ENCODE measurements at regions of chr1 and their contacts with region 1.

Region 1: DNA sequence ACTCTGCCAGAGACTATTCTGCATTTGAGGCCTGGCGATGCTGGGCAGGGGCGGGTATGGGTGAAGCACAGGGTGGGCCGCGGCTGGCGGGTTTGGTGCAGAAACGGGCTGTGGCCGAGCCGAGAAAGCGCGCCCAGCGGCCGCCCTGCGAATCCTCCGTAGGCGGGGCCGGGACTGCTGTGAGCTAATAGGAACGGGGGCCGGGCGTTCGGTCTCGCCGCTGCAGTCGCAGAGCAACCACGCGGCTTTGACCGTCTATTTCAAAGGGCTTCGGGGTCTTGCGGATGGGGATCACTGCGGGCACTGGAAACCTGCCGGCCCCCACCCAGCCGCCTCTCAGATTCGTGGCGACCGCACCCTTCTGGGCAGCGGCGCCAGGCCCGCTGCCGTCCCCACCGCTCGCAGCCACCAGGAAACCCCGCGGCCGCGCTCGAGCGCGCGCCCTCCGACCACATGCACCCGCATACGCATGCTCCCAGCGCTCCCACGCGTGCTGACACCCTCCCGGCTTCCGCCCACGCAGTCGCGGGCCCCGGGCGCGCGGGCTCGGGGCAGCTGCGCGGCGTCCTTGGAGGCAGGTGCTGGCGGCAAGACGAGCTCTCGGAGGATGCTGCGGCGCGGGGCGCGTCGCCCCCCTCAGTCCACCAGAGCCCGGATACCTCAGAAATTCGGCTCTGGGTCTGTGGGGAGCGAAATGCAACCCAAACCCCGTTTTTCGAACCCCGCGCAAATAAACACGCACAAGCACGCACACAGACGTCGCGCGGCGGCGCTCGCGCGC is 32.6 kb downstream of the DNTTIP2 start:
- DNase-seq: peak; percentile 85 to 91 (median 88)
- H3K4me3 ChIP-seq: peak overlapping the region; percentile 58 to 92
- H3K4me3 Mint-ChIP-seq: peak overlapping the region; percentile 87 to 97 (median 90)
- H3K27ac ChIP-seq: peak overlapping the region; percentile 81
- H3K27ac Mint-ChIP-seq: peak overlapping the region; percentile 89 to 100 (median 95)
- H3K4me1 ChIP-seq: peaks cover 31% of the 10 kb centered on the region
- H3K4me1 Mint-ChIP-seq: peaks cover 17 to 44% (median 25%) of the 10 kb centered on the region in 4 donors
- H3K27me3 ChIP-seq: no peaks in the 10 kb centered on the region
- H3K27me3 Mint-ChIP-seq: peaks cover 1 to 6% of the 10 kb centered on the region in 2 donors

Region 2: GRCh38 chr1:92831762-92832536 is 1014.5 kb before region 1 on chr1 and contains the start of gene RPL5:
- CTCF ChIA-PET with region 1: interaction called, 3 read pairs
- POLR2A ChIA-PET with region 1: interaction called, 3 read pairs
- intact Hi-C with region 1: loop called (anchors 5 kb)
- DNase-seq: peak; percentile 97 to 100 (median 98)
- H3K4me3 ChIP-seq: peak within 1 kb of the TSS; percentile 54 to 100
- H3K4me3 Mint-ChIP-seq: peak within 1 kb of the TSS; percentile 98 to 100 (median 100)
- H3K27ac ChIP-seq: peak within 1 kb of the TSS; percentile 93
- H3K27ac Mint-ChIP-seq: peak within 1 kb of the TSS; percentile 98 to 100 (median 99)
- H3K4me1 ChIP-seq: peaks cover 46% of the 10 kb centered on the region
- H3K4me1 Mint-ChIP-seq: peaks cover 35 to 55% (median 45%) of the 10 kb centered on the region in 4 donors
- H3K27me3 ChIP-seq: no peaks in the 10 kb centered on the region
- H3K27me3 Mint-ChIP-seq: peaks cover 0 to 1% of the 10 kb centered on the region in 2 donors
- total RNA-seq, gene RPL5: 1,501 to 1,588 TPM

Region 3: GRCh38 chr1:93304716-93305138 is 541.7 kb before region 1 on chr1:
- CTCF ChIA-PET with region 1: interaction called, 40 read pairs
- POLR2A ChIA-PET with region 1: interaction called, 4 read pairs
- intact Hi-C with region 1: loop called (anchors 1 kb)
- DNase-seq: peak; percentile 51 to 60 (median 59)
- H3K4me3 ChIP-seq: no peak overlapping the region
- H3K4me3 Mint-ChIP-seq: no peak overlapping the region
- H3K27ac ChIP-seq: no peak overlapping the region
- H3K27ac Mint-ChIP-seq: no peak overlapping the region
- H3K4me1 ChIP-seq: no peaks in the 10 kb centered on the region
- H3K4me1 Mint-ChIP-seq: peaks cover 0 to 1% (median 0%) of the 10 kb centered on the region in 4 donors
- H3K27me3 ChIP-seq: no peaks in the 10 kb centered on the region
- H3K27me3 Mint-ChIP-seq: no peaks in the 10 kb centered on the region

Region 4: DNA sequence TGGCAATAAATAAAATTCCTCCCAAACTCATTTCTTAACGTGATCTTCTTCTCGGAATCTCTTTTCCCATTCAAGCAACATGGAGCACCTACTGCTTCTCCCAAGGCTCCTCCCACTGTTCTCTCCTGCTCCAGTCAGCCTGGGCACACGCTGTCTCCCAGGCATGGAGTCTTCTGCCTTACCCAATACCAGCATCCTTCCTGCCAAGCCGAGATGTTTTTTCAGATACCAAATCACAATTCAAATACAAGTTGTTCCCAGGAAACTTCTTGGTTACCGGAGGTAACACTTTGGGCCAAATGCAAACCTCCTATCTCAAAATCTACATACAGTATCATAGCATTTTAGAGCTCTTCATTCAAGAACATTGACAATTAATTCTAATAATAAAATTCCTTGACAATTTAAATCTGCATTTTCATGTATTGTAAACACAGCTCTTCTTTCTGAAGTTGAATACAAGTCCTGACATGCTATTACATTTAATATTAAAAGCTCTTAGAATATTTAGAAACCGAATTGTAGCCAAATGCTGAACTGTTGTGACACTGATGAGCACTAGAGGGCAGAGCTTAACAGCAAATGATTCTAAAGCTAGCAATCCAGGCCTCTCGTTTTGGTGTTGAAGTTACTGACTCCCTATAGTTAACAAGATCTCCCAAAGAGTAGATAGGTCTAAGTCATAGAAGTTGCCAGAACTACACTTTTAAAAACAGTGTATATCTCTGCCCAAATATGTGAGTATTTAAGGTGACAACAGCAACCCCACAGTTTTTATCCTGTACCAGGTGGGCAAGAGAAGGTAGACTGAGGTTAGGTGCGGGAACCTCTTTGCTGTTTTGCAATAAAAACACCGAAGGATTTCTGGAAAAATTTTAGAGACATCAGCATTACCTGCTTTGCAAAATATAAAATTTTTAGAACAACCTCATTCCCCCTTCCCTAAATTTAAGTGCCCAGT is 217.0 kb before region 1 on chr1:
- CTCF ChIA-PET with region 1: interaction called, 191 read pairs
- POLR2A ChIA-PET with region 1: interaction called, 15 read pairs
- intact Hi-C with region 1: loop called (anchors 1 kb)
- DNase-seq: peak in 4 of 5 donors; percentile 62 to 69 (median 63)
- H3K4me3 ChIP-seq: no peak overlapping the region
- H3K4me3 Mint-ChIP-seq: no peak overlapping the region
- H3K27ac ChIP-seq: no peak overlapping the region
- H3K27ac Mint-ChIP-seq: peak overlapping the region in 2 of 7 donors; percentile 46 to 55
- H3K4me1 ChIP-seq: no peaks in the 10 kb centered on the region
- H3K4me1 Mint-ChIP-seq: no peaks in the 10 kb centered on the region
- H3K27me3 ChIP-seq: no peaks in the 10 kb centered on the region
- H3K27me3 Mint-ChIP-seq: no peaks in the 10 kb centered on the region

Region 5: GRCh38 chr1:93878889-93879586 is 32.6 kb after region 1 on chr1 and contains the start of gene DNTTIP2:
- CTCF ChIA-PET with region 1: interaction called, 10 read pairs
- POLR2A ChIA-PET with region 1: interaction called, 69 read pairs
- intact Hi-C with region 1: loop called (anchors 1 kb)
- DNase-seq: peak; percentile 86 to 89 (median 88)
- H3K4me3 ChIP-seq: peak within 1 kb of the TSS; percentile 88 to 96
- H3K4me3 Mint-ChIP-seq: peak within 1 kb of the TSS; percentile 92 to 100 (median 98)
- H3K27ac ChIP-seq: peak within 1 kb of the TSS; percentile 92
- H3K27ac Mint-ChIP-seq: peak within 1 kb of the TSS; percentile 97 to 100 (median 99)
- H3K4me1 ChIP-seq: peaks cover 38% of the 10 kb centered on the region
- H3K4me1 Mint-ChIP-seq: peaks cover 29 to 54% (median 41%) of the 10 kb centered on the region in 4 donors
- H3K27me3 ChIP-seq: no peaks in the 10 kb centered on the region
- H3K27me3 Mint-ChIP-seq: no peaks in the 10 kb centered on the region
- total RNA-seq, gene DNTTIP2: 71.4 to 75.4 TPM

Region 6: GRCh38 chr1:94209425-94209824 is 363.0 kb after region 1 on chr1:
- CTCF ChIA-PET with region 1: no interaction called
- POLR2A ChIA-PET with region 1: no interaction called
- intact Hi-C with region 1: no loop called
- DNase-seq: no peak
- H3K4me3 ChIP-seq: no peak overlapping the region
- H3K4me3 Mint-ChIP-seq: no peak overlapping the region
- H3K27ac ChIP-seq: no peak overlapping the region
- H3K27ac Mint-ChIP-seq: no peak overlapping the region
- H3K4me1 ChIP-seq: no peaks in the 10 kb centered on the region
- H3K4me1 Mint-ChIP-seq: no peaks in the 10 kb centered on the region
- H3K27me3 ChIP-seq: no peaks in the 10 kb centered on the region
- H3K27me3 Mint-ChIP-seq: peaks cover 3% of the 10 kb centered on the region in 2 donors

Region 7: GRCh38 chr1:94417978-94418663 is 571.7 kb after region 1 on chr1 and contains the start of gene ABCD3:
- CTCF ChIA-PET with region 1: no interaction called
- POLR2A ChIA-PET with region 1: interaction called, 21 read pairs
- intact Hi-C with region 1: loop called (anchors 1 kb)
- DNase-seq: peak; percentile 96 to 99 (median 98)
- H3K4me3 ChIP-seq: peak within 1 kb of the TSS; percentile 59 to 88
- H3K4me3 Mint-ChIP-seq: peak within 1 kb of the TSS in 2 of 8 donors; percentile 90 to 91
- H3K27ac ChIP-seq: peak within 1 kb of the TSS; percentile 70
- H3K27ac Mint-ChIP-seq: peak within 1 kb of the TSS in 6 of 7 donors; percentile 37 to 92 (median 88)
- H3K4me1 ChIP-seq: peaks cover 46% of the 10 kb centered on the region
- H3K4me1 Mint-ChIP-seq: peaks cover 23 to 40% (median 28%) of the 10 kb centered on the region in 4 donors
- H3K27me3 ChIP-seq: no peaks in the 10 kb centered on the region
- H3K27me3 Mint-ChIP-seq: peaks cover 0 to 4% of the 10 kb centered on the region in 2 donors
- total RNA-seq, gene ABCD3: 23.6 to 23.8 TPM